Activated CD4-positive, alpha-beta T cell treated with anti-CD3 and anti-CD28 coated beads, Interleukin-2, amount 10 ng/mL, durations not matched to agents 24 days and 14 days (primary cell): ENCODE measurements at regions of chr14 and their contacts with region 1.

Region 1: GRCh38 chr14:65444230-65444629 is 31.7 kb downstream of the FUT8 start:
- DNase-seq: no peak
- H3K4me3 Mint-ChIP-seq: no peak overlapping the region
- H3K27ac Mint-ChIP-seq: peak overlapping the region; percentile 44
- H3K4me1 Mint-ChIP-seq: peaks cover 33% of the 10 kb centered on the region
- H3K27me3 Mint-ChIP-seq: no peaks in the 10 kb centered on the region

Region 2: GRCh38 chr14:64232095-64232838 is 1212.0 kb before region 1 on chr14:
- intact Hi-C with region 1: no loop called
- DNase-seq: peak; percentile 61
- H3K4me3 Mint-ChIP-seq: no peak overlapping the region
- H3K27ac Mint-ChIP-seq: peak overlapping the region; percentile 82
- H3K4me1 Mint-ChIP-seq: peaks cover 8% of the 10 kb centered on the region
- H3K27me3 Mint-ChIP-seq: peaks cover under 1% of the 10 kb centered on the region

Region 3: GRCh38 chr14:65117769-65118701 is 326.2 kb before region 1 on chr14:
- intact Hi-C with region 1: no loop called
- DNase-seq: no peak
- H3K4me3 Mint-ChIP-seq: no peak overlapping the region
- H3K27ac Mint-ChIP-seq: no peak overlapping the region
- H3K4me1 Mint-ChIP-seq: peaks cover 2% of the 10 kb centered on the region
- H3K27me3 Mint-ChIP-seq: peaks cover 10% of the 10 kb centered on the region

Region 4: GRCh38 chr14:65431981-65432948 is 12.0 kb before region 1 on chr14:
- intact Hi-C with region 1: no loop called
- DNase-seq: no peak
- H3K4me3 Mint-ChIP-seq: peak overlapping the region; percentile 52
- H3K27ac Mint-ChIP-seq: no peak overlapping the region
- H3K4me1 Mint-ChIP-seq: peaks cover 43% of the 10 kb centered on the region
- H3K27me3 Mint-ChIP-seq: no peaks in the 10 kb centered on the region

Region 5: DNA sequence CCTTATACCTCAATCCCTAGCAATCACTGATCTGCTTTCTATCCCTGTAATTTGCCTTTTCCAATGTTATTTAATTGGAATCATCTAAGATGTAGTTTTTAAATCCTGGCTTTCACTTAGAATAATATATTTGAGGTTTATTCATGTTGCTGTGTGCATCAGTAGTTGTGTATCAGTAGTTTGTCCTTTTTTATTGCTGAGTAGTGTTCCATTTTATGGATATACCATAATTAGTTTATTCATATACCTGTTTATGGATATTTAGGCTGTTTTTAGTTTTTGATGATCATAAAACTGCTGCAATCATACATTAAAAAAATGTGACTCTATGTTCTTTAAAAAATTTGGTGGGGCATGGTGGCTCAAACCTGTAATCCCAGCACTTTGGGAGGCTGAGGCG is 12.0 kb after region 1 on chr14:
- intact Hi-C with region 1: no loop called
- DNase-seq: no peak
- H3K4me3 Mint-ChIP-seq: no peak overlapping the region
- H3K27ac Mint-ChIP-seq: no peak overlapping the region
- H3K4me1 Mint-ChIP-seq: peaks cover 23% of the 10 kb centered on the region
- H3K27me3 Mint-ChIP-seq: no peaks in the 10 kb centered on the region

Region 6: GRCh38 chr14:65478596-65478995 is 34.4 kb after region 1 on chr14:
- intact Hi-C with region 1: loop called (anchors 1 kb)
- DNase-seq: no peak
- H3K4me3 Mint-ChIP-seq: no peak overlapping the region
- H3K27ac Mint-ChIP-seq: peak overlapping the region; percentile 13
- H3K4me1 Mint-ChIP-seq: peaks cover 53% of the 10 kb centered on the region
- H3K27me3 Mint-ChIP-seq: no peaks in the 10 kb centered on the region